Esophagus squamous epithelium (tissue), 5 donors: ENCODE measurements at regions of chr5 and their contacts with region 1.

Region 1: GRCh38 chr5:134041570-134042411 is 37.0 kb upstream of the VDAC1 start:
- DNase-seq: no peak
- H3K4me3 ChIP-seq: no peak overlapping the region
- H3K27ac ChIP-seq: no peak overlapping the region
- H3K4me1 ChIP-seq: peaks cover 0 to 12% (median 0%) of the 10 kb centered on the region in 3 donors
- H3K27me3 ChIP-seq: no peaks in the 10 kb centered on the region
- CTCF ChIP-seq: no peak
- POLR2A ChIP-seq: no peak

Region 2: DNA sequence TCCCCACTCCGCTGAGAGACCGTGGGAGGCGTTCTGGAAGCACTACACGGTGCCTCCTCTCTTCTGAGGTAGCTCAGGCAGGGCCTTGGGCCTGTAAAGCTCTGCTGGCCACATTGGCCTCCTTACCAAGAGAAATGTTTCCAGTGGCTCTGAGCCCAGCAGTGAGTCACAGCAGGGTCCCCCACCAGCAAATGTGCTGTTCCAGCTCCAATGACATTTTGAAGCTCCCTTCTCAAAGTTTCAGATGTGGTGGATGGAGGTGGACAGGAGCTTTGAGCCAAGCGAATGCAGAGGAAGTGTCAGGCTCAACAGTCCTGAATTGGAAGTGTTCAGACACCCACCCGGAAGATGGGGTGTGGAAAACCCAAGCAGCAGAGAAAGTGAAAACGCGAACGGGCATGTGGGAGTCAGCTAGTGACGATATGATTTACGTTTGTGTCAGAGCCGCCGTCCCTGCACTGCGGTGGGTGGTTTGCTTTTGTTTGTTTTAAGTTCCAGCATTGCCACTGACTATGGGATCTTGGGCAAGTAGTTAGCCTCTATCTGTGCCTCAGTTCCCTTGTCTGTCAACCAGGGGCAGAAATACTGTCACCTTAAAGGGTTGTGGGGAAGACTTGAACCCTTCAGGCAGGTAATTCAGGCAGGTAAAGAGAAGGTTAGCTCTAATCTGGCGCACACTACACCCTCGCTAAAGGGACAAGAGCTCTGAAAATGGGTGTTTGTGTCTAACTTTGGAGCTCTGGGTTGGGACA is 111.6 kb before region 1 on chr5:
- intact Hi-C with region 1: no loop called
- DNase-seq: no peak
- H3K4me3 ChIP-seq: no peak overlapping the region
- H3K27ac ChIP-seq: no peak overlapping the region
- H3K4me1 ChIP-seq: peaks cover 0 to 3% (median 0%) of the 10 kb centered on the region in 3 donors
- H3K27me3 ChIP-seq: no peaks in the 10 kb centered on the region
- CTCF ChIP-seq: no peak
- POLR2A ChIP-seq: no peak

Region 3: DNA sequence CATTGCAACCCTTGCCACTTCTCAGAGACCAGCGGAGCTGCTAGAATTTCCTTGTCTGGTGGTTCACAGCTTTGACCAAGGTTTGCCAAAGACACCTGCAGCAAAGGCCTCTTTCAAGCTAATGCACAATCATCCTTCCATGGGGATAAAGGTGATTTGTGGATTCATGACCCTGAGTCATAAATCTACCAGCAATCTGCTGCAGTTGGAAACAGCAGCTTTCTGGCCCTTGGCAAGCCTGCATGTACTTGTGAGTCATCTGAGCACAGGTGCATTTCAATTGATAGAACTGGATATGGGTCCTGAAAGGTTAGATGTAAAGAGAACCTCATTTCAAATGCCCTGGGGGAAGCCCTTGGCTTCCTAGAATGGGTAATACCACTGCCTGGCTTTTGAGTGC is 51.1 kb after region 1 on chr5:
- intact Hi-C with region 1: loop called (anchors 10 kb)
- DNase-seq: no peak
- H3K4me3 ChIP-seq: no peak overlapping the region
- H3K27ac ChIP-seq: no peak overlapping the region
- H3K4me1 ChIP-seq: peaks cover 0 to 33% (median 0%) of the 10 kb centered on the region in 3 donors
- H3K27me3 ChIP-seq: peaks cover 0 to 39% (median 0%) of the 10 kb centered on the region in 4 donors
- CTCF ChIP-seq: peak in 1 of 6 experiments; percentile 9
- POLR2A ChIP-seq: no peak

Region 4: GRCh38 chr5:134138416-134139376 is 96.9 kb after region 1 on chr5:
- intact Hi-C with region 1: loop called (anchors 2 kb)
- DNase-seq: no peak
- H3K4me3 ChIP-seq: no peak overlapping the region
- H3K27ac ChIP-seq: no peak overlapping the region
- H3K4me1 ChIP-seq: peaks cover 7 to 46% (median 10%) of the 10 kb centered on the region in 3 donors
- H3K27me3 ChIP-seq: no peaks in the 10 kb centered on the region
- CTCF ChIP-seq: no peak
- POLR2A ChIP-seq: no peak

Region 5: DNA sequence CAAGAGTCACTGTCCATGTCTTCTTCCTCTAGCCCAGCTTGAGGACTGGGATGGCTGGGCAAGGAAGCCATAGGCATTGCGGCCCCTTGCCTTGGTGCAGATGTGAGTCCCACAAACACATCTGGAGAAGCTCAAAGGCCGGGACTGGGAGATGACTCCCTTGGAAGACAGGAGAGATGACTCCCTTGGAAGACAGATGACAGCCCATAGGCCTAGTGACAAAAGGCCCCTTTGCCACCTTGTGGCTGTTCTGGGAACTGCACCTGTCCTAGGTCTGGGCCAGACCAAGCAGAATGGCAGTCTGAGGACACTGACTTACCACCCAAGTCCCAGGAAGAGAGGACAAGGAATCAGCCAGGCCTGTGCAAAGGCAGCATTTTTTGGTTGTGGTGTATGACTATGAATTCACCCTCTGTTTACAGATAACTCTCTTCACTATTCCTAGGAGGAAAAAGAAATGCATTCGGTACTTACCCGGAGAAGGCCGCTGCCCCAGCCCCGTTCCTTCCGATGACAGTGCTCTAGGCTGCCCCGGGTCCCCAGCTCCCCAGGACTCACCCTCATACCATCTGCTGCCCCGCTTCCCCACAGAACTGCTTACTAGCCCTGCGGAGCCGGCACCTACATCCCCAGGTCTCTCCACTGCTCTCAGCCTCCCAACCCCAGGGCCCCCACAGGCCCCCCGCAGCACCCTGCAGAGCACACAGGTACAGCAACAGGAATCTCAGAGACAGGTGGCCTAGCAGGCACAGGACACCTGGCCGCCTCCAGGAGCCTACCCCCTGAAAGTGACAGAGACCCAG is 104.2 kb after region 1 on chr5:
- intact Hi-C with region 1: loop called (anchors 2 kb)
- DNase-seq: no peak
- H3K4me3 ChIP-seq: no peak overlapping the region
- H3K27ac ChIP-seq: no peak overlapping the region
- H3K4me1 ChIP-seq: peaks cover under 1 to 47% (median 4%) of the 10 kb centered on the region in 3 donors
- H3K27me3 ChIP-seq: no peaks in the 10 kb centered on the region
- CTCF ChIP-seq: peak; percentile 80 to 99 (median 94)
- POLR2A ChIP-seq: no peak